Activated naive CD4-positive, alpha-beta T cell treated with anti-CD3 and anti-CD28 coated beads for 36 hours (primary cell): ENCODE measurements at regions of chr10 and their contacts with region 1.

Region 1: GRCh38 chr10:84179059-84179710 is 5.6 kb downstream of the GPR15LG start:
- DNase-seq: peak; percentile 42
- H3K4me3 Mint-ChIP-seq: no peak overlapping the region
- H3K27ac Mint-ChIP-seq: no peak overlapping the region
- H3K4me1 Mint-ChIP-seq: peaks cover 6% of the 10 kb centered on the region
- H3K27me3 Mint-ChIP-seq: no peaks in the 10 kb centered on the region

Region 2: GRCh38 chr10:84139126-84140035 is 39.8 kb before region 1 on chr10 and contains the start of gene GHITM:
- CTCF ChIA-PET with region 1: no interaction called
- intact Hi-C with region 1: loop called (anchors 2 kb)
- DNase-seq: peak; percentile 100
- H3K4me3 Mint-ChIP-seq: peak within 1 kb of the TSS; percentile 95
- H3K27ac Mint-ChIP-seq: peak within 1 kb of the TSS; percentile 99
- H3K4me1 Mint-ChIP-seq: peaks cover 36% of the 10 kb centered on the region
- H3K27me3 Mint-ChIP-seq: no peaks in the 10 kb centered on the region
- total RNA-seq, gene GHITM: 281 TPM

Region 3: GRCh38 chr10:84152769-84153168 is 26.4 kb before region 1 on chr10:
- CTCF ChIA-PET with region 1: interaction called, 3 read pairs
- intact Hi-C with region 1: loop called (anchors 2 kb)
- DNase-seq: no peak
- H3K4me3 Mint-ChIP-seq: no peak overlapping the region
- H3K27ac Mint-ChIP-seq: peak overlapping the region; percentile 79
- H3K4me1 Mint-ChIP-seq: peaks cover 32% of the 10 kb centered on the region
- H3K27me3 Mint-ChIP-seq: no peaks in the 10 kb centered on the region

Region 4: GRCh38 chr10:84160663-84161362 is 18.4 kb before region 1 on chr10:
- CTCF ChIA-PET with region 1: no interaction called
- intact Hi-C with region 1: loop called (anchors 2 kb)
- DNase-seq: no peak
- H3K4me3 Mint-ChIP-seq: no peak overlapping the region
- H3K27ac Mint-ChIP-seq: no peak overlapping the region
- H3K4me1 Mint-ChIP-seq: peaks cover 17% of the 10 kb centered on the region
- H3K27me3 Mint-ChIP-seq: peaks cover 4% of the 10 kb centered on the region

Region 5: GRCh38 chr10:84194424-84195040 is 15.3 kb after region 1 on chr10 and contains the start of gene CDHR1:
- CTCF ChIA-PET with region 1: interaction called, 3 read pairs
- intact Hi-C with region 1: loop called (anchors 1 kb)
- DNase-seq: peak; percentile 57
- H3K4me3 Mint-ChIP-seq: peak within 1 kb of the TSS; percentile 51
- H3K27ac Mint-ChIP-seq: no peak within 1 kb of the TSS
- H3K4me1 Mint-ChIP-seq: peaks cover 11% of the 10 kb centered on the region
- H3K27me3 Mint-ChIP-seq: peaks cover 12% of the 10 kb centered on the region
- total RNA-seq, gene CDHR1: 0.37 to 1.4 TPM

Region 6: GRCh38 chr10:84205049-84205852 is 26.1 kb after region 1 on chr10:
- CTCF ChIA-PET with region 1: interaction called, 4 read pairs
- intact Hi-C with region 1: loop called (anchors 2 kb)
- DNase-seq: peak; percentile 86
- H3K4me3 Mint-ChIP-seq: no peak overlapping the region
- H3K27ac Mint-ChIP-seq: no peak overlapping the region
- H3K4me1 Mint-ChIP-seq: no peaks in the 10 kb centered on the region
- H3K27me3 Mint-ChIP-seq: no peaks in the 10 kb centered on the region

Region 7: DNA sequence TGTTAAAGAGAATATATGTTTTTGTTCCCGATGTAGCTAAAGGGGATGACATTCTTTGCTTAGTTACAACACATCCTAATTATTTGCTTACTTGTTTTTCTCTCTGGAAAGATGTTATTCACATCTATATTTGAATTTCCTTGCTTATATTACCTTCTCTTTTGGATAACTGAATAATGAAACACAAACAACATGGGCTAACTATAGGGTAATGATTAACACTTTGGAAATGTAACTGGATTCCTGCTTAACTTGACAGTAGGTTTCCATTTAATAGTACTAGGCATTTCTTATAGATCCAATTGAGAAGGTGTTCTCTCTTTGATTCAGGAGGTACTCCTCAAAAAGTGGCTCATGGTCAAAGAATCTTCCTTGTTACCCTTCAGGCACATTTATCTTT is 290.3 kb after region 1 on chr10:
- CTCF ChIA-PET with region 1: no interaction called
- intact Hi-C with region 1: no loop called
- DNase-seq: no peak
- H3K4me3 Mint-ChIP-seq: no peak overlapping the region
- H3K27ac Mint-ChIP-seq: no peak overlapping the region
- H3K4me1 Mint-ChIP-seq: peaks cover 3% of the 10 kb centered on the region
- H3K27me3 Mint-ChIP-seq: no peaks in the 10 kb centered on the region